ENCODE measurements at regions of chr5 and their contacts with region 1.

Region 1: DNA sequence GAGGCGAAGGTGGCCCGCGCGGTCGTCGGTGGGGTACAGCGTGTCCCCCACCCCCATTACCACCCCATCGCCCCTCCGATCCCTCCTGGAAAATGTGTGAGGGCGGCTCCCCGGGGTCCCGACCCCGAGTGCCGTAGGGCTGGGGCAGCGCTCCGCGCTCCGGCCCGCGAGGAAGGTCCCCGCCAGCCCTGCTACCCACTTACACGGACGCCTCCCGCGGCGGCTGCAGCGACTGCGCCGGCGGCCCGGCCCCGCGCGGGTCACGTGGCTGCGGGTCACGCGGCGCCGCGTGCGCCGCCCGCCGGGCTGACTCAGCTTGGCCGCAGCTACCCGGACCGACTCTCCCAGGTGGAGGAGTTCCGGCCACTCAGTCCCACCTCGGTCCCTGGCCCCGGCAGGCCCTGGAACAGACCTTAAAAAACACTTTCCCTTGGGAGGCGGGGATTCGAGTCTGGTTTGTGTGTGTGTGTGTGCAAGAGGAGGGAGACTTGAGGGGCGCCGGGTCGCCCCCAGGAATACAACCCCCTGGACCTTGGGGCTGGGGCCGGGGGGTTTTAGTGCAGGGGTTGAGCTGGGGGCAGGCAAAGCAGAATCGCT is at the start of gene GNPDA1:
- DNase-seq: peak; percentile 77
- ATAC-seq: peak; percentile 68
- H3K4me3 ChIP-seq: peak within 1 kb of the TSS; percentile 88
- H3K27ac ChIP-seq: peak within 1 kb of the TSS; percentile 51
- H3K4me1 ChIP-seq: peaks cover 38% of the 10 kb centered on the region
- H3K27me3 ChIP-seq: no peaks in the 10 kb centered on the region
- CTCF ChIP-seq: no peak
- total RNA-seq, gene GNPDA1: 34.7 and 36.1 TPM in 2 replicates

Region 2: DNA sequence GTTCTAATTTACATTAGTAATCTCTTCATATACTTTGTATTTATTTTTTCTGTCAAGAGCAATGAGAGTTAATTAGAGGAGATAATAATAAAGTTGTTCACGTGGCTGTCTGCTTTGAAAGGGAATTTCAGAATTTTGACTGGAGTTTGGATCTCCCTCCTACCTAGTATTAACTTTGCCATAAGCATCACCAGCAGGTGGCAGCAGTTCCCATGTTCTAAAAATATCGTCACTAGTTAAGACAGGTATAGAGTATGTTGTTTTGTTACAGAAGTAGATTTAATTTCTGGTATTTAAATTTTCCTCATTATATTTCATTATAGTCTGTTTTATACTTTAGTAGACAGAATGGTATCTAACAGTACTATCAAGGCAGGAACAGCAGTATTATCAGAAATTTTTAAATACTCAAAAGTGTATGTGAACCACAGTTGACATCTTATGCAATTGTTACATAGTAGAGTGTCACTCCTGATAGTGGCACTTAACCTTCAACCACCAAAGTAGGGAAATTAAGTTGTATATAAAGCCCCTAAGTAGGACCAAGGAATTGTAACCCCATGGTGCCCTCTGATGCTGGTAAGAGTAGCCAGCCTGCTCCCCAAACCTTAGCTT is 20.4 kb before region 1 on chr5:
- CTCF ChIA-PET with region 1: interaction called, 10 read pairs
- POLR2A ChIA-PET with region 1: interaction called, 6 read pairs
- intact Hi-C with region 1: no loop called
- DNase-seq: peak; percentile 80
- ATAC-seq: peak; percentile 83
- H3K4me3 ChIP-seq: no peak overlapping the region
- H3K27ac ChIP-seq: no peak overlapping the region
- H3K4me1 ChIP-seq: no peaks in the 10 kb centered on the region
- H3K27me3 ChIP-seq: no peaks in the 10 kb centered on the region
- CTCF ChIP-seq: peak; percentile 82

Region 3: GRCh38 chr5:142024771-142025304 is 11.9 kb after region 1 on chr5:
- CTCF ChIA-PET with region 1: interaction called, 10 read pairs
- POLR2A ChIA-PET with region 1: interaction called, 4 read pairs
- intact Hi-C with region 1: loop called (anchors 1 kb)
- DNase-seq: peak; percentile 83
- ATAC-seq: peak; percentile 97
- H3K4me3 ChIP-seq: peak overlapping the region; percentile 71
- H3K27ac ChIP-seq: peak overlapping the region; percentile 76
- H3K4me1 ChIP-seq: peaks cover 31% of the 10 kb centered on the region
- H3K27me3 ChIP-seq: no peaks in the 10 kb centered on the region
- CTCF ChIP-seq: no peak

Region 4: GRCh38 chr5:142108432-142109330 is 95.8 kb after region 1 on chr5 and contains the start of gene NDFIP1:
- CTCF ChIA-PET with region 1: interaction called, 3 read pairs
- POLR2A ChIA-PET with region 1: no interaction called
- intact Hi-C with region 1: loop called (anchors 2 kb)
- DNase-seq: peak; percentile 77
- ATAC-seq: peak; percentile 94
- H3K4me3 ChIP-seq: peak within 1 kb of the TSS; percentile 96
- H3K27ac ChIP-seq: peak within 1 kb of the TSS; percentile 35
- H3K4me1 ChIP-seq: peaks cover 11% of the 10 kb centered on the region
- H3K27me3 ChIP-seq: no peaks in the 10 kb centered on the region
- CTCF ChIP-seq: no peak
- total RNA-seq, gene NDFIP1: 33.5 and 38.2 TPM in 2 replicates

Region 5: DNA sequence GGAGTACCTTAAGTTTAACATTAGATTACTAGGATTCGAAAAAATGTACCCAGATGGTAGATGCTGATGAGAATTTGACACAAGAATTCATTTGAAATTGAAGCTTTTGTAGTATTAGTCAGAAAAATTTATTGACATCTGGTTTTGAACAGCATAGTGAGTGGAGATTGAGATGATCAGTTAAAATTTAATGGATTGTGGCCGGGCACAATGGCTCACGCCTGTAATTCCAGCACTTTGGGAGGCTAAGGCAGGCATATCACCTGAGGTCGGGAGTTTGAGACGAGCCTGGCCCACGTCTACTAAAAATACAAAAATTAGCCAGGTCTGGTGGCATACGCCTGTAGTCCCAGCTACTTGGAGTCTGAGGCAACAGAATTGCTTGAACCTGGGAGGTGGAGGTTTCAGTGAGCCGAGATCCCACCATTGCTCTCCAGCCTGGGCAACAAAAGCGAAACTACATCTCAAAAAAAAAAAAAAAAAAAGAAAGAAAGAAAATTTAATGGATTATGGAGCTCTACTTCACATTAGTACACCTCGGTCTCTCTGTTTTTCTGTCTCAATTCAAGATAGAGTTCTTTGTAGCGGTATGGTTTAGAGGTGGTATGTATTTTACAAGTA is 116.7 kb after region 1 on chr5:
- CTCF ChIA-PET with region 1: interaction called, 3 read pairs
- POLR2A ChIA-PET with region 1: interaction called, 12 read pairs
- intact Hi-C with region 1: no loop called
- DNase-seq: no peak
- ATAC-seq: no peak
- H3K4me3 ChIP-seq: no peak overlapping the region
- H3K27ac ChIP-seq: no peak overlapping the region
- H3K4me1 ChIP-seq: no peaks in the 10 kb centered on the region
- H3K27me3 ChIP-seq: no peaks in the 10 kb centered on the region
- CTCF ChIP-seq: no peak

Region 6: DNA sequence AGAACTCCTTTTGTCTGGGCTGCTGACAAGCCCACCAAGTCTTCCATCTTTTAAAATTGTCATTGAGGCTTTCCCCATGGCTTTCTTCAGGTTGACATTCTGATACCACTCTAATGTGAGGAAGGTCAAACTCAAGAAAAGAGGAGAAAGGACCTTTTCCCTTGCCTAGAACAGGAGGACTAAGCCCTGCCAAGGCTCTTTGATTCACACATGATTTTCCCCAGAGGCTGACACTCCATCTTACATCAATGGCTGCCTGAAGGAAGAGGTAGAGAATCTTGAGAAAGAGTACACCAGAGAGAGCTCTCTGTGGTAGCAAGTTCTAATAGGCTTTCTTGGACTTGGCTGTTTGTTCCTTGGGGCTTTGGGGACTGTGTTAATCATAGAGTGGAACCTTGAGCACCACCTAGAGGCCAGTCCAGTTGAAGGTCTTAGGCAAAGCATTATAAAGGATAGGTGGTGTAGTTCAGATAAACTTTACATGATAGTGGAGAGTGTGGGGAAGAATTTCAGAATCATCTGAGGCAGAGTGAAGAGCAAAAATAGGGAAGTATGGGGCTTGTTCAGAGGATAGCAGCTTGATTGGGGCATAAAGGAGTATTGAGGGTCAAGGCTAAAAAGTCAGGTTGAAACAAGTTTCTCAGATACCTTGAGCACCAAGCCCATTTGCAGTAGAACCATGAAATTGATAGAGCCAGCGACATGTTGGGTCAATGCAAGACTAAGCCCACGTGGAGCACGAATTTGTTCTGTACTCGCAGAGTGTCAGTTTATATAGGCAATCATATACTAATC is 132.4 kb after region 1 on chr5:
- CTCF ChIA-PET with region 1: interaction called, 9 read pairs
- POLR2A ChIA-PET with region 1: interaction called, 5 read pairs
- intact Hi-C with region 1: loop called (anchors 1 kb)
- DNase-seq: peak; percentile 74
- ATAC-seq: peak; percentile 91
- H3K4me3 ChIP-seq: no peak overlapping the region
- H3K27ac ChIP-seq: no peak overlapping the region
- H3K4me1 ChIP-seq: no peaks in the 10 kb centered on the region
- H3K27me3 ChIP-seq: no peaks in the 10 kb centered on the region
- CTCF ChIP-seq: peak; percentile 81

Measured in PC-3 (cell line).